ENCODE measurements at regions of chr1 and their contacts with region 1.

Region 1: GRCh38 chr1:231776010-231776756 is 149.6 kb downstream of the DISC1 start:
- DNase-seq: peak; percentile 89
- H3K4me3 ChIP-seq: no peak overlapping the region
- CTCF ChIP-seq: peak; percentile 0

Region 2: GRCh38 chr1:231763456-231763855 is 12.7 kb before region 1 on chr1:
- CTCF ChIA-PET with region 1: interaction called, 69 read pairs
- POLR2A ChIA-PET with region 1: no interaction called
- DNase-seq: no peak
- H3K4me3 ChIP-seq: no peak overlapping the region
- CTCF ChIP-seq: no peak